ENCODE measurements at regions of chr20 and their contacts with region 1.

Region 1: DNA sequence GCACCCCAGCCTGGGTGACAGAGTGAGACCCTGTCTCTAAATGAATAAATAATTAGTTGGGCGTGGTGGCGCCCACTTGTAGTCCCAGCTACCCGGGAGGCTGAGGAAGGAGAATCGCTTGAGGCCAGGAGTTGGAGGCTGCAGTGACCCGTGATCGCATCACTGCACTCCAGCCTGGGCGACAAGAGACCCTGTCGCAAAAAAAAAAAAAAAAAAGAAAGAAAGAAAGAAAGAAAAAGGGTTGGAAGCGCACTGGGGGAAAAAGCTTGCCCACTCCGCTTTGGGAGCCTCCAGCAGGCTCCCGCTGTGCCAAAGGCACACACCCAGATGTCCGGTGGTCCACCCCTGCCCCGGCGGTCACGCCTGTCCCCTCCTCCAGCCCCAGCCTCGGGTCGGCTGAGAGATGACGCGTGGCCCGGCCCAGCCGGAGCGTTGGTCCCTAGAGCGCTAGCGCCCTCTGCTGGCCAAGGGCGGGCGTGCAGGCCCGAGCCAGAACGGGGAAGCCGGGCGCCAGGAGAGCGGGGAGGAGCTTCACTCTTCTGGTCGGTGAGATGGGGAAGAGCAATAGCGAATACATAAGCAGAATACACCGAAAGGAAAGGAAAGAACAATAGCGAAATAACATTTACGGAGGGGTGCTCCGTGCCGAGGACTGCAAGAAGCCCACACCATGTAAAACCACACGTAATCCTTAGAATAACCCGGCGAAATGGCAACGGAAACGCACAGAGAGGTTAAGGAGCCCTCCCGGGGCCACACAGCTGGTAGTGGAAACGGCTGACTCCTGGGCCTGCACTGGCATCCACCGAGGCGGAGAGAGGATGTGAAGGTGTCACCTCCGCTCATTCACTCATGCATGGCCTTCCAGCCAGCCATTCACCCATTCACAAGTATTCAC is 41.7 kb downstream of the UBE2V1 start:
- DNase-seq: peak; percentile 94
- H3K4me3 Mint-ChIP-seq: peak overlapping the region; percentile 54
- H3K27ac Mint-ChIP-seq: no peak overlapping the region
- H3K4me1 Mint-ChIP-seq: peaks cover 2% of the 10 kb centered on the region
- H3K27me3 Mint-ChIP-seq: no peaks in the 10 kb centered on the region

Region 2: GRCh38 chr20:49989234-49990065 is 81.8 kb before region 1 on chr20:
- CTCF ChIA-PET with region 1: interaction called, 257 read pairs
- POLR2A ChIA-PET with region 1: no interaction called
- intact Hi-C with region 1: no loop called
- DNase-seq: no peak
- H3K4me3 Mint-ChIP-seq: no peak overlapping the region
- H3K27ac Mint-ChIP-seq: no peak overlapping the region
- H3K4me1 Mint-ChIP-seq: no peaks in the 10 kb centered on the region
- H3K27me3 Mint-ChIP-seq: no peaks in the 10 kb centered on the region

Region 3: GRCh38 chr20:50085452-50086365 is 14.5 kb after region 1 on chr20:
- CTCF ChIA-PET with region 1: interaction called, 43 read pairs
- POLR2A ChIA-PET with region 1: interaction called, 4 read pairs
- intact Hi-C with region 1: no loop called
- DNase-seq: peak; percentile 36
- H3K4me3 Mint-ChIP-seq: no peak overlapping the region
- H3K27ac Mint-ChIP-seq: peak overlapping the region; percentile 39
- H3K4me1 Mint-ChIP-seq: peaks cover 31% of the 10 kb centered on the region
- H3K27me3 Mint-ChIP-seq: no peaks in the 10 kb centered on the region

Region 4: DNA sequence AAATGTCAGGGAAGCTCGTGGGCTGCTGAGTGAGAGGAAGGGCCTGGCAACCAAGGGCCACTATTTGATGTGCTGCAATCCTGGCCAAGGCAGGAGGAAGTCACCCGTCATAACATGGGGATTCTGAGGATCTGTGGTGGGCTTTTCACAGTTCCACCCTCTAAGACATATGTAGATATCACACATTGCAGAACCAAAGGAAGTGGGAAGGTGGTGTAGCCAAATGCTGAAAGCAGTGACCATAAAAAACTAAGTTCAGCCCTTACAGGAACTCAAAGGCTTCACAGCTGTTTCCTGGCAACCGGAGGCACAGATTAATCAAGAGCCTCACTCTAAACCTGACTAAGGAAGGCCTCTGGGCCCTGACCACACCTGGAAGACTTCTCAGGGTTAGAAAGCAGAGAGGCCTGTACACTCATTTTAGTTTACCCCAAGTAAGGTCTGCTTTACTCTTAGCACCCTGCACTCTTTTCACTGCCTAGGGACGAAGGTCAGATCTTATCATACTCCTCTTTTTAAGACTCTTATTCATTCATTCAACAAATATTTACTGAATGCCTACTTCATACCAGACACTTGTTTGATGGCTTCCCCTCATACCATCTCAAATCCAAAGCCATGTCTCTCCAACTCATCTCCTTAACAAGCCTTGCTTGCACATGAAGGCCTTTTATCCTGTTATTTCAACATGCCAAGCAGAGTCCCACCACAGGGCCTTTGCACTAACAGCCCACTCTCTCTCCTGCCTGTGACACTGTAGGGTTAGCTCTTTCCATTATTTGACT is 39.1 kb after region 1 on chr20:
- CTCF ChIA-PET with region 1: interaction called, 12 read pairs
- POLR2A ChIA-PET with region 1: no interaction called
- intact Hi-C with region 1: no loop called
- DNase-seq: peak; percentile 81
- H3K4me3 Mint-ChIP-seq: peak overlapping the region; percentile 95
- H3K27ac Mint-ChIP-seq: peak overlapping the region; percentile 95
- H3K4me1 Mint-ChIP-seq: peaks cover 81% of the 10 kb centered on the region
- H3K27me3 Mint-ChIP-seq: no peaks in the 10 kb centered on the region

Region 5: DNA sequence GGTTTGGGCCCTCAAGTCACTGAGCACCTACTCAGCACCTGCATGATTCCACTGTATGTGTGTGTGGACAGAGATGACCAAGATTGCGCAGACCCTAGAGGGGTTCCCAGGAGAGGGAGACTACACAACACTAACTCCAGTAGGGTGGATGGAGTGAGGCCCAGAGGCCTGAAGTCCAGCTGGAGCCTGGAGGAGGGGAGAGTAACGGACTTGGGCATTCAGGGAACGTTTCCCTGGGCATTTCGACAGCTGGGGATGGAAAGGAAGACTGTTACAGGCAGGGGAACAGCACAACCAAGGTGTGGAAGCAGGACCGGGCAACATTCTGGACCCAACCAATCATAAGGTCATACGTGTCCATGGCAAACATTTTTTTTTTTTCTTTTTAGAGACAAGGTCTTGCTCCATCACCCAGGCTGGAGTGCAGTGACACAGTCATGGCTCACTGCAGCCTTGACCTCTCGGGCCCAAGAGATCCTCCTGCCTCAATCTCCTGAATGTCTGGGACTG is 108.3 kb after region 1 on chr20:
- CTCF ChIA-PET with region 1: interaction called, 10 read pairs
- POLR2A ChIA-PET with region 1: no interaction called
- intact Hi-C with region 1: no loop called
- DNase-seq: no peak
- H3K4me3 Mint-ChIP-seq: no peak overlapping the region
- H3K27ac Mint-ChIP-seq: no peak overlapping the region
- H3K4me1 Mint-ChIP-seq: no peaks in the 10 kb centered on the region
- H3K27me3 Mint-ChIP-seq: peaks cover 3% of the 10 kb centered on the region